ENCODE measurements at regions of chr5 and their contacts with region 1.

Region 1: GRCh38 chr5:103258957-103259704 is 568 bp downstream of the MACIR start:
- DNase-seq: peak; percentile 62
- H3K4me3 Mint-ChIP-seq: peak overlapping the region; percentile 80
- H3K27ac Mint-ChIP-seq: peak overlapping the region; percentile 88
- H3K4me1 Mint-ChIP-seq: peaks cover 27% of the 10 kb centered on the region
- H3K27me3 Mint-ChIP-seq: peaks cover 10% of the 10 kb centered on the region

Region 2: DNA sequence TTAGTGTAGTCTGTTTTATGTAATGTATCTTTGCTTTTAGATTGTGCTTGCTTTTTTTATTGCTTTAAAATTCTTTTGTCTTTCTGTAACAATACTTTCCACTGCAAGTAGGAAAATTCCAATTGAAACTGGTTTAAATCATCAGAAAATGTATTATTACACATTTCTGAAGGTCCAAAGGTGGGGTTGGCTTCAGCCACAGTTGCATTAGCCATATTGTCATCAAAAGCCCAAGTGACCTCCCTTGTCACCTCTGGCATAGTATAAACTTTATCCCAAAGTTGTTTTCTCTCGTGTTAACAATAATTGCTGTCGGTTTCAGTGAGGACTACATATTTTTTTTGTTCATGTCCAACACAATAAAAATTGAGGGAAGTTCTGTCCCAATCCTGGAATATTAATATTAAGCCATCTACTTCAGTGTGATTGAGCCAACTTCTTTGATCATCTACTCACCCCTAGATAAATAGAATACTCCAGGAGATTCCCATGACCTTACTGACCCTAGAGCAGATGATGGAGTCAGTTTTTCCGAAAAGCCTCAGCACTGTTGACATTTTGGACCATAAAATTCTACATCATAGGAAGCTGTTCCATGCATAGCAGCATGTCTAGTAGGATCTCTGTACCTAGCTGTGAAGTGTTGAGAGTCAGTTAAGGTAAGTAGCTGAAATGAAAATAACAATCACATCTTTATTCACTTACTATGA is 53.0 kb before region 1 on chr5:
- CTCF ChIA-PET with region 1: no interaction called
- POLR2A ChIA-PET with region 1: no interaction called
- DNase-seq: no peak
- H3K4me3 Mint-ChIP-seq: no peak overlapping the region
- H3K27ac Mint-ChIP-seq: no peak overlapping the region
- H3K4me1 Mint-ChIP-seq: peaks cover 21% of the 10 kb centered on the region
- H3K27me3 Mint-ChIP-seq: no peaks in the 10 kb centered on the region

Region 3: GRCh38 chr5:103224118-103224893 is 34.8 kb before region 1 on chr5:
- CTCF ChIA-PET with region 1: interaction called, 10 read pairs
- POLR2A ChIA-PET with region 1: no interaction called
- DNase-seq: peak; percentile 64
- H3K4me3 Mint-ChIP-seq: no peak overlapping the region
- H3K27ac Mint-ChIP-seq: peak overlapping the region; percentile 22
- H3K4me1 Mint-ChIP-seq: peaks cover 2% of the 10 kb centered on the region
- H3K27me3 Mint-ChIP-seq: peaks cover 23% of the 10 kb centered on the region

Region 4: GRCh38 chr5:103272377-103272776 is 13.2 kb after region 1 on chr5:
- CTCF ChIA-PET with region 1: interaction called, 10 read pairs
- POLR2A ChIA-PET with region 1: no interaction called
- DNase-seq: no peak
- H3K4me3 Mint-ChIP-seq: no peak overlapping the region
- H3K27ac Mint-ChIP-seq: no peak overlapping the region
- H3K4me1 Mint-ChIP-seq: peaks cover 28% of the 10 kb centered on the region
- H3K27me3 Mint-ChIP-seq: no peaks in the 10 kb centered on the region

Measured in activated CD4-positive, alpha-beta T cell treated with anti-CD3 and anti-CD28 coated beads, Interleukin-2, amount 10 ng/mL, durations not matched to agents 7 days and 5 days (primary cell).